PC-9 (cell line): ENCODE measurements at regions of chr2 and their contacts with region 1.

Region 1: GRCh38 chr2:42743413-42743972 is 20.4 kb downstream of the OXER1 start:
- DNase-seq: no peak
- H3K4me3 ChIP-seq: no peak overlapping the region
- H3K27ac ChIP-seq: no peak overlapping the region
- H3K4me1 ChIP-seq: no peaks in the 10 kb centered on the region
- H3K27me3 ChIP-seq: no peaks in the 10 kb centered on the region
- CTCF ChIP-seq: no peak

Region 2: DNA sequence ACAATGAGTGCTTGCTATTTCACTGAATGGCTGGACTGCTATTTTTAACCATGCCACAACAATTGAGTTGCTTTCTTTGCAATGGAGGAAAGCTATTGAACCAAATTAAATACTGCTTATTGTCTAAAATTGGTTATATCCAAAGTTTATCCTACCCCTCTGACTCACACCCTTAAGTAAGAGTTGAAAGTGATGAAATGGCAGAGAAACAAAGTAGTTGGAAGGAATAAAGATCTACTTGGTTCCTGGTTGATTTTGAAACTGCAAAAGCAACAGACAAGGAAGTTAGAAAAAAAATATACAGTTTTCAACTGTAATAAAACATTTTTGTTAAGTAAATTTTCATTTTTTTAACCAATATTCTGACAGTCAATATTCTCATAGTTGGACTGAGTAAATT is 526.8 kb before region 1 on chr2:
- CTCF ChIA-PET with region 1: no interaction called
- POLR2A ChIA-PET with region 1: interaction called, 19 read pairs
- intact Hi-C with region 1: no loop called
- DNase-seq: peak in 1 of 2 experiments; percentile 78
- H3K4me3 ChIP-seq: no peak overlapping the region
- H3K27ac ChIP-seq: peak overlapping the region; percentile 87
- H3K4me1 ChIP-seq: peaks cover 14% of the 10 kb centered on the region
- H3K27me3 ChIP-seq: no peaks in the 10 kb centered on the region
- CTCF ChIP-seq: no peak

Region 3: DNA sequence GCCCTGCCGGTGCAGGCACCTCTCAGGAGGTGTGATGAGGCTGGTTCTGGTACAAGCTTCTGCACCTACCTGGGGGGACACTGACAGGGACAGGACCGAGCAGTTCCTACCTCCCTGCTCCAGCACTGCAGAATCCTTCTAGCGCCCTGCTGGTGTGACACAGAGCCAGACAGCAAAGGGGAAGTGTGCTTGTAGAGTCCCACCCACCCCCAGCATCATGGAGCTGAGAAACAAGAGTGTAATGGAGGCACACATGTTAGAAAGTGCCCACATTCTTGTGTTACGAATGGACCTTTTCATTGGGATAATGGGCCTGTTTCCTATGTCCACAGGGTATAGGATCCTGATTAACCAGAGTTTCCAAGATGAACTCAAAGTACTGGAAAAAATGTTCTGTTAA is 17.8 kb before region 1 on chr2:
- CTCF ChIA-PET with region 1: no interaction called
- POLR2A ChIA-PET with region 1: interaction called, 27 read pairs
- intact Hi-C with region 1: no loop called
- DNase-seq: no peak
- H3K4me3 ChIP-seq: no peak overlapping the region
- H3K27ac ChIP-seq: no peak overlapping the region
- H3K4me1 ChIP-seq: no peaks in the 10 kb centered on the region
- H3K27me3 ChIP-seq: no peaks in the 10 kb centered on the region
- CTCF ChIP-seq: no peak

Region 4: GRCh38 chr2:42758751-42759150 is 15.3 kb after region 1 on chr2:
- CTCF ChIA-PET with region 1: no interaction called
- POLR2A ChIA-PET with region 1: interaction called, 10 read pairs
- intact Hi-C with region 1: no loop called
- DNase-seq: no peak
- H3K4me3 ChIP-seq: no peak overlapping the region
- H3K27ac ChIP-seq: no peak overlapping the region
- H3K4me1 ChIP-seq: no peaks in the 10 kb centered on the region
- H3K27me3 ChIP-seq: no peaks in the 10 kb centered on the region
- CTCF ChIP-seq: no peak